ENCODE measurements at regions of chr7 and their contacts with region 1.

Region 1: GRCh38 chr7:128209229-128210035 is 31.6 kb upstream of the LEP start:
- DNase-seq: peak; percentile 68 to 76
- H3K4me3 ChIP-seq: no peak overlapping the region
- H3K27ac ChIP-seq: no peak overlapping the region
- H3K4me1 ChIP-seq: no peaks in the 10 kb centered on the region
- H3K27me3 ChIP-seq: peaks cover 5% of the 10 kb centered on the region; the same call in 1 of the 2 replicates
- CTCF ChIP-seq: peak; percentile 97

Region 2: GRCh38 chr7:126803060-126803665 is 1406.3 kb before region 1 on chr7:
- CTCF ChIA-PET with region 1: no interaction called
- POLR2A ChIA-PET with region 1: no interaction called
- intact Hi-C with region 1: loop called (anchors 2 kb)
- DNase-seq: peak; percentile 40 to 64
- H3K4me3 ChIP-seq: no peak overlapping the region
- H3K27ac ChIP-seq: no peak overlapping the region
- H3K4me1 ChIP-seq: no peaks in the 10 kb centered on the region
- H3K27me3 ChIP-seq: no peaks in the 10 kb centered on the region
- CTCF ChIP-seq: peak; percentile 87

Region 3: DNA sequence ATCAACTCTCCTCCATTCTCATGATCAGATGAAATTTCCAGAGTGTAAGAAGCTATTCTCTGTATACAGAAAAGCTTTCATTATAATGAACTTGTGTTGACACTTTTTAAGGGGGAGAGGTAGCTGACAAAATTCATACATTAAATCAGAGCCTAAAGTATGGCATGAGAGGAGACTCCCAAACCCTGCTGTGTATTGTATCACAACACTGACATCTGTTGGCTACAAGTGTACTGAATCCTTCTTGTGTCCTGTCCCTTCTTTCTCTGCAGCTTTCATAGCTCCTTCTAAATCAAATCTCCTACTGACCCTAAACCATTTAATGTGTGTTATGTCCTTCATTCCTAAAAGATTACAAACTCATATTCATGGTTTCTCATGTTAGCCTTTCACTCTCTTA is 694.9 kb before region 1 on chr7:
- CTCF ChIA-PET with region 1: interaction called, 17 read pairs
- POLR2A ChIA-PET with region 1: no interaction called
- intact Hi-C with region 1: no loop called
- DNase-seq: peak in 1 of 2 experiments; percentile 37
- H3K4me3 ChIP-seq: no peak overlapping the region
- H3K27ac ChIP-seq: no peak overlapping the region
- H3K4me1 ChIP-seq: no peaks in the 10 kb centered on the region
- H3K27me3 ChIP-seq: peaks cover 19% of the 10 kb centered on the region
- CTCF ChIP-seq: peak; percentile 42; the same call in 1 of the 2 replicates

Region 4: GRCh38 chr7:128020159-128020558 is 189.3 kb before region 1 on chr7:
- CTCF ChIA-PET with region 1: no interaction called
- POLR2A ChIA-PET with region 1: no interaction called
- intact Hi-C with region 1: loop called (anchors 5 kb)
- DNase-seq: no peak
- H3K4me3 ChIP-seq: no peak overlapping the region
- H3K27ac ChIP-seq: peak overlapping the region; percentile 99
- H3K4me1 ChIP-seq: peaks cover 47% of the 10 kb centered on the region
- H3K27me3 ChIP-seq: no peaks in the 10 kb centered on the region
- CTCF ChIP-seq: no peak; the same call in 1 of the 2 replicates

Region 5: GRCh38 chr7:128121711-128122530 is 87.5 kb before region 1 on chr7:
- CTCF ChIA-PET with region 1: interaction called, 13 read pairs
- POLR2A ChIA-PET with region 1: no interaction called
- intact Hi-C with region 1: no loop called
- DNase-seq: no peak
- H3K4me3 ChIP-seq: no peak overlapping the region
- H3K27ac ChIP-seq: no peak overlapping the region
- H3K4me1 ChIP-seq: no peaks in the 10 kb centered on the region
- H3K27me3 ChIP-seq: no peaks in the 10 kb centered on the region
- CTCF ChIP-seq: no peak

Region 6: GRCh38 chr7:128164061-128164954 is 45.1 kb before region 1 on chr7:
- CTCF ChIA-PET with region 1: interaction called, 3 read pairs
- POLR2A ChIA-PET with region 1: no interaction called
- intact Hi-C with region 1: loop called (anchors 2 kb)
- DNase-seq: peak; percentile 96 to 98
- H3K4me3 ChIP-seq: no peak overlapping the region; the same call in 1 of the 2 replicates
- H3K27ac ChIP-seq: peak overlapping the region; percentile 100
- H3K4me1 ChIP-seq: peaks cover 36% of the 10 kb centered on the region
- H3K27me3 ChIP-seq: peaks cover 26% of the 10 kb centered on the region; the same call in 1 of the 2 replicates
- CTCF ChIP-seq: no peak

Measured in PC-9 (cell line).